GM23248 (cell line): ENCODE measurements at regions of chr6 and their contacts with region 1.

Region 1: DNA sequence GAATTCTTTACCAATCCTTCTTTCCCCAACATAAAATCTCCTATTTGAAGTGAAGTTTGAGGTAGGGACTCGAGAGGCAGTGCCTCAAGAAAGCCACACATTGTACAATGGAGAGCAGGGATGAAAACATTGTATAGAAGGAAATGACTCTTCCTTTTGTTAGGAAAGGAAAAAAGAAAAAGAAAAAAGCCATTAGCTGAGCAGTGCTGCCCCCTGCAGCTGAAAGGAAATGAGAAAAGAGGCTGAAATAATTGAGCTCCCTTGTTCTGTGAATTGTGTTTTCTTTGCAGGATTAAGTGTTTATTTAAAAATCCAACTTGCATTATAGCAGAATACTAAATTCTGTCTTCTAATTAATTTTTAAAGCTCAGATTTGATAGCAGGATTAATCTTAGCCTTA is 162.9 kb upstream of the SASH1 start:
- DNase-seq: peak; percentile 69
- H3K4me3 ChIP-seq: no peak overlapping the region
- H3K27ac ChIP-seq: no peak overlapping the region
- H3K4me1 ChIP-seq: no peaks in the 10 kb centered on the region
- H3K27me3 ChIP-seq: no peaks in the 10 kb centered on the region

Region 2: DNA sequence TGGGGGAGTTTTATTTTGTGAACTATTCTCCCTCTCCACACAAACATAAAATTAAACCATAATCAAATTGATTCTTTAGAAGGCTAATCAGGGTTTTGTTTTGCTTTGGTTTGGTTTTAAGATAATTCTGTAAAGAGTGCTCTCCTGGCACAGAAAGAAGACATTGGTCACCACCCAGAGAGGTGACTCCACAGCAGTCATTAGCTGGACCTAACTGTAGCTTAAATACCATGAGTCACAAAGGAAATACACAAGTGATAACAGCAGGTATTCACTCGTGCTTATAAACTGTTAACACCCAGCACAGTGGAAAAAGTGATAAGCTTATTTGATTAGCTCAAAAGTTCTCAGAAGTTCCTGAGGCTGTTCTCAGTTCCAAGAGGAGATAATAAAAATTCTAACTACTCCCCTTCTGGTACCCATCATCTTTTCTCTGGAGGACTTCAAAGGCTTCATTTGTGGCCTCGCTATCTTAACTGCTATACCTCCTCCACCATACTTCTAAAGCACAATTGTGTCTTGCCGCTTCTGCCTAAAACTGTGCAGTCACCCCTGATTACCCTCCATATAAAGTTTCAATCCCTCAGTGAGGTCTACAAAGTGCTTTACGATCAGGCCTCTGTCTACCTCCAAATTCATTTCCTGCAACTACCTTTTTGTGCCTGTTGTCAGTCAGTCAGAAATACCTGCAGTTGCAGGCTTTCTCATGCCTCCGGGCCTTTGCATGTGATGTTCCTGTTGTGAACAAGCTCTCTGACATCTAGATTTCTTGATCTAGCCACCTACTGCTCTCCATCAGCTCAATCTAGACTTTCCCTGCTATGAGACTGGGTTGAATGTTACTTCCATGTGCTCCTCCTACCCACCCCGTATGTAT is 470.2 kb before region 1 on chr6:
- in situ Hi-C with region 1: no loop called
- DNase-seq: no peak
- H3K4me3 ChIP-seq: no peak overlapping the region
- H3K27ac ChIP-seq: no peak overlapping the region
- H3K4me1 ChIP-seq: no peaks in the 10 kb centered on the region
- H3K27me3 ChIP-seq: no peaks in the 10 kb centered on the region

Region 3: DNA sequence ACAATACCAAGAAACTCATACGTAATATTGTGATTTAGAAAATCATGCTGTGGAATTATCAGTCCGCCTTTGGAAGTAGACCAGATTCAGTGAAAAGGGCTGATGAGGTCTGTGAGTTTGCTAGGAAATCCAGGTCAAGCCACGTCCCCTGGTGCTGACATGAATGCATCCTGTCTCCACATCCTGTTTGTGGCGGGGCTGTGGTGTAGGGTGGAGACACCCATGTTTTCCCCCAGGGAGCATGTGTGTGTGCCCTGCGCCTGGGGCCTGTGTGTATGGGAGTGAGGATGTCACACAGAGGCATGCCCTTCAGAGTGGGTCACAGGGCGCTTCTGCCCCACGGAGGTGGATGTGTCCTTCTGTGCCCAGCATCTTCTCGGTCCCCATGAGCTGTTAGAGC is 271.9 kb after region 1 on chr6:
- in situ Hi-C with region 1: loop called (anchors 10 kb)
- DNase-seq: no peak
- H3K4me3 ChIP-seq: no peak overlapping the region
- H3K27ac ChIP-seq: no peak overlapping the region
- H3K4me1 ChIP-seq: no peaks in the 10 kb centered on the region
- H3K27me3 ChIP-seq: no peaks in the 10 kb centered on the region